ENCODE measurements at regions of chr18 and their contacts with region 1.

Region 1: GRCh38 chr18:9275890-9276289 is 58.7 kb upstream of the TWSG1 start:
- DNase-seq: no peak
- H3K4me3 Mint-ChIP-seq: no peak overlapping the region
- H3K27ac Mint-ChIP-seq: no peak overlapping the region
- H3K4me1 Mint-ChIP-seq: no peaks in the 10 kb centered on the region
- H3K27me3 Mint-ChIP-seq: no peaks in the 10 kb centered on the region
- CTCF ChIP-seq: no peak

Region 2: DNA sequence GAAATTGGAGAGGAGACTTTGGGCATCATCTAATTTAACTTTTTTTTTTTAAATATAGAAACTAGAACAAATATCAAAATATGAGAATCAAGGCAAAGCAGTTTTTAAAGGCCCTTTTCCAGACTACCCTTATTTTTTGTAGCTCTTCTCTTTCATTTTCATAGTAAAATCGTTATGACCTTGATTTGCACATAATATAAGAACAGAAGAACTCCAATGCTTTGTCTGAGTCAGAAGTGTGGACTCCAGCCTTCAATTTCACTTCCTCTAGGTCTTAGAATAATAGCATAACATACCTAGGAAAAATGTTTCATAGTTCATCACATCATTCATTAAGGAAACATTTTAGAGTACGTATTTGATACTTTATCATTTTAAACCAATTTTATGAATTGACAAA is 64.9 kb before region 1 on chr18:
- CTCF ChIA-PET with region 1: no interaction called
- intact Hi-C with region 1: loop called (anchors 10 kb)
- DNase-seq: no peak
- H3K4me3 Mint-ChIP-seq: no peak overlapping the region
- H3K27ac Mint-ChIP-seq: no peak overlapping the region
- H3K4me1 Mint-ChIP-seq: no peaks in the 10 kb centered on the region
- H3K27me3 Mint-ChIP-seq: no peaks in the 10 kb centered on the region
- CTCF ChIP-seq: no peak